ENCODE measurements at regions of chr3 and their contacts with region 1.

Region 1: DNA sequence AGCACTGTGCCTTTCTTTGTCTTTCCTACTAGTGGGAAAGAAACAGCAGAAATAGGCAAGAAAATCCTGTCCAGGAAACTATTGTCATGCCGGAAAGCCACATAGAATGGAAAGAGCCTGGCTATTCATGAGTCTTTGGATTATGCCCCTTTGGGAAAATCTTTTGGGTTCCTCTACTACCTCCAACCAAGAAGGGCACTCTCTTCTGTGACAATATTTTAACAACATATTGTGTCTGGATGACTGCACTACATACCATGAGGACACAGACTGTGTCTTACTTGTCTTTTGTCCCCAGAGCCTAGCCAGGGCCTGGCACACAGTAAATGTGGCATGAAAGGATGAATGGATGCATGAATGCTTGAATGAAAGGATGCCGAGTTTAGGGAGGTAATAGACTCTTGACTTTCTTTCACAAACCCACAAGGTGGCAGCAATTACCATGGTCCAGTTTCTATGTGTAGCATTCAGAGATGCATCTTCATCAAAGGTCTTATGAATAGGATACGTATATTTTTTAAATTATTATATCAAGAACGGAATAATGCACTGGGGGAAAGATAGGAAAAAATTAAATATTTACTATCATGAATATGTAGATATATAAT is 30.3 kb downstream of the ARL14 start:
- DNase-seq: no peak
- ATAC-seq: peak; percentile 71
- H3K4me3 ChIP-seq: no peak overlapping the region
- H3K27ac ChIP-seq: no peak overlapping the region
- H3K4me1 ChIP-seq: no peaks in the 10 kb centered on the region
- H3K27me3 ChIP-seq: no peaks in the 10 kb centered on the region

Region 2: GRCh38 chr3:160941885-160942494 is 234.7 kb after region 1 on chr3:
- intact Hi-C with region 1: loop called (anchors 2 to 5 kb)
- DNase-seq: peak; percentile 41 to 54 (median 45)
- ATAC-seq: peak; percentile 69 to 74
- H3K4me3 ChIP-seq: no peak overlapping the region
- H3K27ac ChIP-seq: no peak overlapping the region
- H3K4me1 ChIP-seq: no peaks in the 10 kb centered on the region
- H3K27me3 ChIP-seq: no peaks in the 10 kb centered on the region